K562 (cell line): ENCODE measurements at regions of chr11 and their contacts with region 1.

Region 1: GRCh38 chr11:16632295-16633200 is 105.9 kb upstream of the C11orf58 start:
- DNase-seq: peak in 1 of 4 experiments; percentile 17
- ATAC-seq: peak; percentile 85
- H3K4me3 ChIP-seq: peak overlapping the region; percentile 26
- H3K27ac ChIP-seq: no peak overlapping the region
- H3K4me1 ChIP-seq: no peaks in the 10 kb centered on the region; a peak in 1 of 5 replicates
- H3K27me3 ChIP-seq: no peaks in the 10 kb centered on the region
- CTCF ChIP-seq: peak; percentile 40 to 55 (median 54); a peak in 4 of 6 replicates
- EP300 ChIP-seq: no peak
- POLR2A ChIP-seq: no peak
- RAD21 ChIP-seq: peak in 1 of 2 experiments; percentile 35; a peak in 2 of 4 replicates

Region 2: DNA sequence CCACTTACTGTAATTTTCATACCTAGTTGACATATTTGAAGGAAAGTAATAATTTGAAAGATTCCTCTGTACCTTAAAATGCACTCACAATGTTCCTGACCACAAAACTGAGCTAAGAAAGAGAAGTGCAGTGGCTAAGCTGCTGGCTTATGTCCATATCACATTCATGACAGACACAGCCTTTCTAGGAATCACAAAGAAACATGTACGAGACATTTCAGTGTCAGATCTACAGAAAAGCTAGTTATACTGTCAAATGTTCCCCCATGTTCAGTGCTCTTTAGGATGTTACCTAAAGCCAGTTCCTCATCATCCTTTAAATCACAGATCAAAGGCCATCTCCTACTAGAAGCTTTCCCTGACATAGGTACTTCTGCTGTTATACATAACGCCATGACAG is 36.3 kb before region 1 on chr11:
- CTCF ChIA-PET with region 1: no interaction called
- POLR2A ChIA-PET with region 1: no interaction called
- in situ Hi-C with region 1: no loop called
- intact Hi-C with region 1: no loop called
- DNase-seq: peak in 2 of 4 experiments; percentile 39 to 70
- ATAC-seq: peak; percentile 88
- H3K4me3 ChIP-seq: no peak overlapping the region
- H3K27ac ChIP-seq: peak overlapping the region; percentile 65
- H3K4me1 ChIP-seq: peaks cover 2 to 4% of the 10 kb centered on the region in 2 experiments; a peak in 3 of 5 replicates
- H3K27me3 ChIP-seq: no peaks in the 10 kb centered on the region
- CTCF ChIP-seq: no peak
- EP300 ChIP-seq: 0 out of 2 replicates have a peak, but pooled peaks have one; percentile 1
- POLR2A ChIP-seq: no peak
- RAD21 ChIP-seq: no peak

Region 3: DNA sequence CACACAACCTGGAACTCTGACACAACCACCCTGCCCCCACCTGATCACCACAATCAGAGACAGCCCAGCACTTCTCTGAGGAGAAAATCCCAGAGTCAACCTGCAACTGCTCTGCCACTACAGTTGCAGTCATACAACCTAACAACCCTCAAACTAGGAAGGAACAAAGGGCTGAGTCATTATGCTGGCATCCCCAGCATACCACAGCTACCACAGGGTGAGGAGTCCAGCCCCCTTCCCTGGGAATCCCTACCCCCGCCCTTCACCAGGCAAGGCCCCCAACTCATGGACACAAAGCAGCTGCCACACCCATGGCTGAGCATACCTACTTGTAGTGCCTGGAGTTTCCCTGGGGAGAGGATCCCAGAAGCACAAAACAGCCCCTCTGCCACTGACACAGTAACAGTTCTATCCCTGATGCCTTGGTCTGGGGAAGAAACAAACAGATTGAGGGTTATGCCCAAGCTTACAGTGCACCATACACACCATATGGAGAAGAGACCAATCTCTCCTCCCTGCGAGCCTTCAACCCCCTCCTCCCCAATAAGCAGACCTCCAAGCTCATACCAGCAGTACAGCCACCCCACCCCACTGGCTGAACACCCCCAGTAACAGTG is 37.4 kb after region 1 on chr11:
- CTCF ChIA-PET with region 1: no interaction called
- POLR2A ChIA-PET with region 1: no interaction called
- in situ Hi-C with region 1: no loop called
- intact Hi-C with region 1: no loop called
- DNase-seq: no peak
- ATAC-seq: no peak
- H3K4me3 ChIP-seq: no peak overlapping the region
- H3K27ac ChIP-seq: no peak overlapping the region
- H3K4me1 ChIP-seq: no peaks in the 10 kb centered on the region
- H3K27me3 ChIP-seq: no peaks in the 10 kb centered on the region
- CTCF ChIP-seq: no peak
- EP300 ChIP-seq: no peak
- POLR2A ChIP-seq: no peak
- RAD21 ChIP-seq: no peak

Region 4: DNA sequence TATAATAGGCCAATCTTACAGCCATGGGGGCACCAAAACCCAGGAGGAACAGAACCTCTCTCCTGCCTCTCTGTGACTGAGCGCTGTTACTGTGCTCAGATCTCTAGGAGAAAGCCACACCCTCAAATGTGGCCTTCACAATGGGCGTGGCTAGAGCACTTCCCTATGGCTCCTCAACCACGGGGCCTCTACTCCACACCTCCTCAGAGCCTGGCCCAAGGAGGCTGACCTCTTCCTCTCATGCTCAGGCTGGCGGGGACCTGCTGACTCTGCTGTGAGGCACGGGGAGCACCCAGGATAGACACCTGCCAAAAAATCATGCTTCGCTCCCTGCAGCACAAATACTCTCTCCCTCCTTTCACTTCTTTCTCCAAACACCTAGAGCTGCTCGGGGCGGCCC is 146.9 kb after region 1 on chr11:
- CTCF ChIA-PET with region 1: no interaction called
- POLR2A ChIA-PET with region 1: no interaction called
- in situ Hi-C with region 1: no loop called
- intact Hi-C with region 1: loop called (anchors 10 kb)
- DNase-seq: peak; percentile 80 to 82 (median 80)
- ATAC-seq: peak; percentile 98
- H3K4me3 ChIP-seq: no peak overlapping the region
- H3K27ac ChIP-seq: no peak overlapping the region
- H3K4me1 ChIP-seq: peaks cover 9 to 18% of the 10 kb centered on the region in 2 experiments; a peak in 3 of 5 replicates
- H3K27me3 ChIP-seq: peaks cover 4 to 22% of the 10 kb centered on the region in 2 experiments; a peak in 4 of 5 replicates
- CTCF ChIP-seq: 0 out of 6 replicates have a peak, but pooled peaks of 1 of the 3 experiments have one; percentile 3
- EP300 ChIP-seq: no peak
- POLR2A ChIP-seq: no peak
- RAD21 ChIP-seq: no peak; a peak in 1 of 4 replicates